Breast epithelium (tissue), 4 donors: ENCODE measurements at regions of chr16 and their contacts with region 1.

Region 1: DNA sequence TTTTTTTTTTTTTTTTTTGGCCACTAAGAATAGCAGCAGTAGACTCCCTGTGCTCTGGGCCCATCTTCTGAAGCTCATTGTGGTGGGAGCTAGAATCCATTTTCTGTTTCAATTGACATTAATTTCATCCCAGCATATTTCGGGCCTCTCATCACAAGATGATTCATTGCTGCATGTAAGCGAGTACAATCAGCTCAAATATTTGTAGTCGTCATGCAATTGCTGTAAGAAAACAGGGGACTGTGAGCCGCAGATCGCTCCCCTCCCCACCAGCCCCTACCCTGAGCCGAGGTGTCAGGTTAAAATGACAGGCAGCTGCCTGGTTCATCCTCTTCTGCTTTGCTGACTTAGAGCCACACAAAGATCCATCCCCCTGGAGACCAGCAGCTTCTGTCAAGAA is 358.8 kb upstream of the CDH5 start:
- DNase-seq: no peak
- H3K4me3 ChIP-seq: no peak overlapping the region
- H3K27ac ChIP-seq: peak overlapping the region in 1 of 2 donors; percentile 49
- H3K4me1 ChIP-seq: no peaks in the 10 kb centered on the region
- H3K27me3 ChIP-seq: no peaks in the 10 kb centered on the region
- CTCF ChIP-seq: no peak
- POLR2A ChIP-seq: no peak

Region 2: DNA sequence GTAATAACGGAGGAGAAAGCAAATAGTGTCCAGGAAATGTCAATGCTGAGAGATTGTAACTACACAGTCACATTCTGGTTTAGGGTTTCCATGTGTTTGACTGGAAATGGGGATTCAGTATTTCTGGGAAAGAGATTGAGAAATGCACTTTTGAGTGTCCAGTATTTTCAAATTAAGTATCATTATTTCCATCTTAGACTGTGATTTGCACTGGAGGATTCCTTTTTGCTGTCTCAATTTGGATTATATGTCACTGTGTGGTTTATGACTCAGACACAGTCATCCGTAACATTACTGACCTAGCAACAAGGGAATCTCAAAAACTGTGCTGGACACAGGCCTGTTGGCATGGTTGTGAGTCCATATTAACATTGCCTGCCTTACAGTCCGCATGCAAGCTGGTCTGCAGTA is 1567.3 kb before region 1 on chr16:
- intact Hi-C with region 1: loop called (anchors 10 kb)
- DNase-seq: no peak
- H3K4me3 ChIP-seq: no peak overlapping the region
- H3K27ac ChIP-seq: peak overlapping the region in 1 of 2 donors; percentile 20
- H3K4me1 ChIP-seq: no peaks in the 10 kb centered on the region
- H3K27me3 ChIP-seq: no peaks in the 10 kb centered on the region
- CTCF ChIP-seq: no peak
- POLR2A ChIP-seq: no peak

Region 3: GRCh38 chr16:64919929-64920607 is 1087.6 kb before region 1 on chr16:
- intact Hi-C with region 1: loop called (anchors 5 kb)
- DNase-seq: no peak
- H3K4me3 ChIP-seq: no peak overlapping the region
- H3K27ac ChIP-seq: no peak overlapping the region
- H3K4me1 ChIP-seq: no peaks in the 10 kb centered on the region
- H3K27me3 ChIP-seq: no peaks in the 10 kb centered on the region
- CTCF ChIP-seq: no peak
- POLR2A ChIP-seq: no peak

Region 4: GRCh38 chr16:65059406-65059980 is 948.2 kb before region 1 on chr16:
- intact Hi-C with region 1: no loop called
- DNase-seq: no peak
- H3K4me3 ChIP-seq: no peak overlapping the region
- H3K27ac ChIP-seq: no peak overlapping the region
- H3K4me1 ChIP-seq: no peaks in the 10 kb centered on the region
- H3K27me3 ChIP-seq: no peaks in the 10 kb centered on the region
- CTCF ChIP-seq: no peak
- POLR2A ChIP-seq: no peak

Region 5: GRCh38 chr16:66304151-66304550 is 296.4 kb after region 1 on chr16:
- intact Hi-C with region 1: no loop called
- DNase-seq: no peak
- H3K4me3 ChIP-seq: peak overlapping the region in 1 of 3 donors; percentile 5
- H3K27ac ChIP-seq: no peak overlapping the region
- H3K4me1 ChIP-seq: no peaks in the 10 kb centered on the region
- H3K27me3 ChIP-seq: no peaks in the 10 kb centered on the region
- CTCF ChIP-seq: no peak
- POLR2A ChIP-seq: no peak